AG04449 (cell line): ENCODE measurements at regions of chr5 and their contacts with region 1.

Region 1: DNA sequence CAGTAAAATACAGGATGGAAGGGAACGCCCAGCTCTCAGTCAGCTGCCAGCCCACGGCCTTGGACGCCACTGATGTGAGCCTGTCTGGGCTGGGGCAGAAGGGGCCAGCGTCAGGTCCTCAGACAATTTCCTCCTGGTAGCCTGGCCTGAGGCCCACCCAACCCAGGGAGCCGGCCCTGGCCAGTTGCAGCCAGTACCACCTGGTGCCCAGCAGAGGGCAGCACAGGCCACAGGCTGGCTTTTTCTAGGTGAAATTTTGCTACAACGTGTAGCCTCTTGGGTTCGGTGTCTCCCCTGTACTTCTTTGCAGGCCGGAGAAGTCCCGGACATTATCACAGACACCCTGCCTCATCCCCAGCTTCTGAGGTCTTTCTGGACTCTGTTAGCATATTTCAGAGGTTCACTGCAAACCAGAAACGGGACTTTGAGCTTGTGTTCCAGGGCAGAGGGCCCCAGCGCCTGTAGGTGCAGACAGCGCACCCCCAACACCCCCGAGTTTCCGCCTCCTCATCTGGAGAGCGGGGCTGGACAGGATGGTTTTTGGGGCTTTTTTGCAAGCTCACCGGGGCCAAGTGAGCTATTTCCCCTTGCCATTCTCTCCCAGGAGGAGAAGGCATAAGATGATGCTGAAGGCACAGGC is 45.9 kb upstream of the KCNMB1 start:
- DNase-seq: no peak
- H3K4me3 ChIP-seq: no peak overlapping the region
- CTCF ChIP-seq: peak; percentile 95

Region 2: DNA sequence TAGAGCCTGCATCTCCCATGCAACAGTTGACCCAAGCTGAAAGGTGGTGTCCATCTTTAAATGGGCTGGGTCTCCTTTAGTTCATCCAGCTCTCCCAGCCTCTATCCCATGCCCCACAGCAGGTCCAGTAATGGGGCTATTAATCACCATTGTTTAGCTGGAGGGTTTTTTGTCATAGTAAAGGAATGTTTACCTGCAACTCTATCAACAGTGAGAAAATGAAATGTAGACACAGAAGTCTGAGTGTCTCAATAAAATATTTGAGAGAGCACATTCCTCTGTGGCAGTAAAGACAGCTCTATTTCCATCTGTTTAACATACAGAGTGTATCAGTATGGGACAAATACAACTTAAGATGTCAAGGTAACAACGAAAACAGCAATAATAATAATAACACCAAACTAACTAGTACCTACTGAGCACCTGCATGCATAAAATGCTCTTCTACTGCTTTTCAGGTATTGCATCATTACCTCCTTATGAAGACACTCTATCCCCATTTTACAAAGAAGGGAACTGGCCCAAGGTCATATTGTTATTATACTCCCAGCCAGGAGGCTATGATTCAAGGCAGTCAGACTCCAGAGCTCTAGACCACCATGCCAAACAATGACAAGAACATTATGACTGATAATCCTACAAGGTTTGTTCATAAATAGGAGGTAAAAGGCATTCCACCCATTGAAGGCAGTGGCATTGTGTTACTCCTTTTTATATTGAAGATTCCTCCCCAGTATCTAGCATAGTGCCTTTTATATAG is 223.3 kb before region 1 on chr5:
- CTCF ChIA-PET with region 1: no interaction called
- POLR2A ChIA-PET with region 1: no interaction called
- DNase-seq: no peak
- H3K4me3 ChIP-seq: no peak overlapping the region
- CTCF ChIP-seq: no peak

Region 3: GRCh38 chr5:170420780-170421412 is 14.2 kb before region 1 on chr5:
- CTCF ChIA-PET with region 1: interaction called, 52 read pairs
- POLR2A ChIA-PET with region 1: no interaction called
- DNase-seq: peak; percentile 5
- H3K4me3 ChIP-seq: no peak overlapping the region
- CTCF ChIP-seq: peak; percentile 72

Region 4: DNA sequence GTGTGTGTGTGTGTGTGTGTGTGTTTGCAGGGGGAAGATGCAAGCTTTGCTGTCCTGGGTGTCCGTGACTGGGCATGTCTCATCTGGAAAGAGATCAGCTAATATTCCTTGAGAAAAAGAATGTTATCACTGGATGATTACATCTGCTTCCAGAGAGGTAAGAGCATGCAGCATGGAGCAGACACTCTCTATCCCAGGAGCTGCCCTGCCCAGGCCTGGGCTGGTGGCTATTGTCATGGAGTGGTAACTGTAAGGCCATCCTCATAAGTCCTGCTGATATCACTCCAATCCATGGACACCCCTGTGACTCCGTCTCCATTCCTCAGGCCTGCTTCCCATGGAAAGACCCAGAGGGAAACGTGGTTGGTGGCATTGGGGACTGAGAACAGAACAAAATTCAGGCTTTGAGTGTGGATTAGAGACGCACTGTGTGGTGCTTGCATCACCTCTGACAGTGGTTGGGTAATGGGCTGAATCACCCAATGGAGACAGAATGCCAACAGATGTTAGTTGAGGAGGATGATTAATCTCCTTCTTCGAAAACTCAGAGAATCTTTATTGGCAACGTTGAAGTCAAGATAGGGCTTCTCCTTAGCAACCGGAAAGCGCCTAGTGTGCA is 16.8 kb after region 1 on chr5:
- CTCF ChIA-PET with region 1: interaction called, 30 read pairs
- POLR2A ChIA-PET with region 1: no interaction called
- DNase-seq: no peak
- H3K4me3 ChIP-seq: no peak overlapping the region
- CTCF ChIP-seq: no peak

Region 5: DNA sequence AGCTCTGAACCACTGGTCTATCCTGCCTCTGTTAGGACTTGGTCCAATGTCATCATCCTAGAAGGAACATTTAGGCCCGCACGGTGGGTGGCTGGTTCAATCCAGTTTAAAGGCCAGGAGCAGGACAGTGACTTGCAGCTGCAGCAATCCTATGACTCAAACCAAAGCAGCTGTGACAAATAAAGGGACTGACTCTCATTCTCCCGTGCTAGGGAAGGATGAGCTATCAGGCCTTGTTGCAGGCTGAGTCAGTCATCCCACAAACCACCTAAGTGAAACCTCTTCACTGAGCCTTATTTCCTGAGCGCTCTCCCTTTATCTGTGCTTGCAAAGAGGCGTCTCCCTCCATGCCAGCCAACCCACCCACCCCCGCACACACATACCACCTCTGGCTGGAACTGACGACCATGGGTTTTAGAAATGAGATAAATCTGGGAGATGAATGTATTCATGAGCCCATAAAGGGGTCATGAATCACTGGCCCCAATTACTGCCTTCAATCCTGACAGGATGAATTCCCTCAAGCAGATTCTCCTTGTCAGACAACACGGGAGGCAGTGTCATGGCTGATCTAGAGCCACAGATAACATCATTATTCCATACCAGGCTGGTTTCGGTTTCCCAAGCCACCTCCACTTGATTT is 162.1 kb after region 1 on chr5:
- CTCF ChIA-PET with region 1: interaction called, 13 read pairs
- POLR2A ChIA-PET with region 1: no interaction called
- DNase-seq: peak; percentile 21
- H3K4me3 ChIP-seq: no peak overlapping the region
- CTCF ChIP-seq: no peak

Region 6: GRCh38 chr5:170623576-170624181 is 188.6 kb after region 1 on chr5:
- CTCF ChIA-PET with region 1: interaction called, 292 read pairs
- POLR2A ChIA-PET with region 1: interaction called, 3 read pairs
- DNase-seq: peak; percentile 5
- H3K4me3 ChIP-seq: no peak overlapping the region
- CTCF ChIP-seq: peak; percentile 80

Region 7: DNA sequence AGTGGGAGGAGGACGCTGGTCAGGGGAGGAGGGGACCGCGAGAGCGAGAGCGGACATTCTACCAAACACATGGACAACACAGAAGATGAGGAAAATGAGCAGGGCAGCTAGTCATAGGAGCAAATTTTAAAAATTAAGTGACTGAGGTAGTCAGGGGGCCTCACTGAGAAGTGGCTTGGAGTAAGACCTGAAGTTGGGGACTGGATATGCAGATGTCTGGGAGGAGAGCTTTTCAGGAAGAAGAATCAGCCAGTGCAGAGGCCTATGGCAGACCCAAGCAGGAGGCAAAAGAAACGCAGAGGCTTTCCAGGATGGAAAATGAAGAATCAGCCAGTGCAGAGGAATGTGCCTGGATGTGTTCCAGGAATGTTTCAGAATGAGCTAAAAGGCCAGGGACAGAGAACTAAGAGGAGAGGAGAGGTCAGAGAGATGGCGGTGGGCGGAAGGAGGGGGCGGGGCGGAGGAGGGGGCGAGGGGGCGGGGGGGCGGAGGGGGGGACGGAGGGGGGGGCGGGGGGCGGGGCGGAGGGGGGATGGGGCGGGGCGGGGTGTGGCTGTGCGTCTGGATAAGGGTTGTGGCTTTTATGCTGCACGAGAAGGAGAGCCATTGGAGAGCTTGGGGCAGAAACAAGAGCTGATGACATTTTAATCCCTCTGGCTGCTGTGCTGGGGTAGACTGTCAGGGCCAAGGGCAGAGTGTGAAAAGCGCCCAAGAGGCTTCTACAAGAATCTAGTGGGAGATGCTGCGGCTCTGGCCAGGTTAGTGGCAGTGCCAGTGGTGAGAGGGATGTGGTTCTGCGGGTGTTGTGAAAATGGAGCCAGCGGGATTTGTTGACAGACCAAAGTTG is 198.4 kb after region 1 on chr5:
- CTCF ChIA-PET with region 1: interaction called, 292 read pairs
- POLR2A ChIA-PET with region 1: interaction called, 3 read pairs
- DNase-seq: peak; percentile 37
- H3K4me3 ChIP-seq: peak overlapping the region; percentile 34
- CTCF ChIP-seq: no peak

Region 8: GRCh38 chr5:170638454-170639220 is 203.6 kb after region 1 on chr5:
- CTCF ChIA-PET with region 1: interaction called, 176 read pairs
- POLR2A ChIA-PET with region 1: interaction called, 3 read pairs
- DNase-seq: no peak
- H3K4me3 ChIP-seq: no peak overlapping the region
- CTCF ChIP-seq: peak; percentile 84